ENCODE measurements at regions of chr20 and their contacts with region 1.

Region 1: DNA sequence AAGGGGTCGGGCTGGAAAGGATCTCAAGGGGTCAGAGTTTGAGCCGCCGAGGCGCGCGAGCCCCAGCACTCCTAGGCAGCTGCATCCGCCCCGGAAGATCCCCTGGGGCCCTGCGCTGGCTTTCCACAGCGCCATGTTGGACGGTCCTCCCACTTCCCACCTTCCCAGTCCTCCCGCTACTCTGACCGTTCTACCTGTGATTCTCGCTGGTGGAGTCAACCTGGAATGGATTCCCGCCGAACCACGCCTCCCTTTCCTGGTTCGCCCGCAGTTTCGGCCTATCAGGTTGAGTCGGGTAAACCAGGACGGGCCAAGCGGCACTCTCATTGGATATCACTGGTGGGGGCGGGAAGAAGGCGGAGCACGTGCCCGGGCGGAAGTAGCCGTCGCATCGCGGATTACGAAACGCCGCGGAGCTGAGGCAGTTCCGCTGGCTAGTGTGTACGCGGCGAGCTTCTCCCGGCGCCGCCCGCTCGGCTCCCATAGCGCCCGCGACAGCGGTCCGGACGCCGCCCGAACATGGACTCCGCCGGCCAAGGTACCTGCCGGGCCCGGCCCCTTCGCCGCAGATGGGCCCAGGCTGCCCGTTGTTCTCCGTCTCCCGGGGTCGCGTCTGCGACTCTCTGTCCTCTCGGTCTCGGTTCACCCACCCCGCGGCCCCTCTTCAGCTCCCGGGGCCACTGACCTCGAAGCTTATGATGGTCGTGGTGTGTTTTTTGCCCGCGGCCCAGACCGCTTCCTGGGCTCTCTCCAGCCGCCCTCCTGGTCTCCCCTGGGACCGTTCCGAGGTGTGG is at the start of gene TPD52L2:
- DNase-seq: peak; percentile 100
- H3K4me3 ChIP-seq: peak within 1 kb of the TSS; percentile 83 to 87
- H3K27ac ChIP-seq: peak within 1 kb of the TSS; percentile 93
- H3K4me1 ChIP-seq: peaks cover 5% of the 10 kb centered on the region
- H3K27me3 ChIP-seq: no peaks in the 10 kb centered on the region
- CTCF ChIP-seq: peak in 1 of 4 experiments; percentile 13
- POLR2A ChIP-seq: peak; percentile 92
- total RNA-seq, gene TPD52L2: 105 to 127 TPM

Region 2: GRCh38 chr20:63537525-63538203 is 327.4 kb before region 1 on chr20:
- intact Hi-C with region 1: loop called (anchors 10 kb)
- DNase-seq: peak; percentile 64
- H3K4me3 ChIP-seq: peak overlapping the region in 1 of 2 donors; percentile 17
- H3K27ac ChIP-seq: peak overlapping the region; percentile 73 to 80
- H3K4me1 ChIP-seq: peaks cover 5% of the 10 kb centered on the region
- H3K27me3 ChIP-seq: no peaks in the 10 kb centered on the region
- CTCF ChIP-seq: peak; percentile 84 to 99 (median 95)
- POLR2A ChIP-seq: peak; percentile 13

Region 3: DNA sequence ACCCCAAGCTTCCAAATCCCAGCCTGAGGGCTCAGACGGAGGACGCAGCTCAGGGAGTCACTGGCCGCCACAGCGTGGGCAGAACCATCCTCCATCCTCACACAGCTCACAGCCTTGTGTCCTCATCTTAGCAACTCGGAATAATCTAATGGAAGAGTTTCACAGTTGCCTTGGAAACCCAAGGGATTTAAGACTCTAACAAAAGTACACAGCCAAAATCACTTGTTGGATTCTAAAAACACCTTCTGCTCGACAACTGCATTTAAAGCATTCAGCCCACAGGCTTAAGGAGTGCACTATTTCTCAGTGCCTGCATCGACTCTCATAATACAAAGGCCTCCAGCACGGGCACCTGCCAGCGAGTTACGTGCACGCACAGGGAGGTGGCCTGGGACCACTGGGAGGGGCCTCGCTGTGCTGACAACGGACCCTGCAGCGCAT is 79.3 kb before region 1 on chr20:
- intact Hi-C with region 1: loop called (anchors 5 kb)
- DNase-seq: no peak
- H3K4me3 ChIP-seq: no peak overlapping the region
- H3K27ac ChIP-seq: no peak overlapping the region
- H3K4me1 ChIP-seq: no peaks in the 10 kb centered on the region
- H3K27me3 ChIP-seq: no peaks in the 10 kb centered on the region
- CTCF ChIP-seq: no peak
- POLR2A ChIP-seq: no peak

Region 4: GRCh38 chr20:63810730-63811494 is 54.1 kb before region 1 on chr20:
- intact Hi-C with region 1: no loop called
- DNase-seq: no peak
- H3K4me3 ChIP-seq: no peak overlapping the region
- H3K27ac ChIP-seq: no peak overlapping the region
- H3K4me1 ChIP-seq: no peaks in the 10 kb centered on the region
- H3K27me3 ChIP-seq: no peaks in the 10 kb centered on the region
- CTCF ChIP-seq: no peak
- POLR2A ChIP-seq: no peak

Region 5: GRCh38 chr20:63829932-63830835 is 34.9 kb before region 1 on chr20:
- intact Hi-C with region 1: loop called (anchors 5 kb)
- DNase-seq: no peak
- H3K4me3 ChIP-seq: peak overlapping the region; percentile 65 to 72
- H3K27ac ChIP-seq: peak overlapping the region; percentile 47 to 60
- H3K4me1 ChIP-seq: no peaks in the 10 kb centered on the region
- H3K27me3 ChIP-seq: no peaks in the 10 kb centered on the region
- CTCF ChIP-seq: no peak
- POLR2A ChIP-seq: no peak